ENCODE measurements at regions of chr3 and their contacts with region 1.

Region 1: GRCh38 chr3:15241341-15241740 is 35.3 kb downstream of the CAPN7 start:
- DNase-seq: no peak
- ATAC-seq: no peak
- H3K4me3 ChIP-seq: no peak overlapping the region
- H3K27ac ChIP-seq: no peak overlapping the region
- H3K4me1 ChIP-seq: no peaks in the 10 kb centered on the region
- H3K27me3 ChIP-seq: no peaks in the 10 kb centered on the region
- CTCF ChIP-seq: 0 out of 2 replicates have a peak, but pooled peaks have one; percentile 21
- POLR2A ChIP-seq: no peak
- RAD21 ChIP-seq: 0 out of 2 replicates have a peak, but pooled peaks have one; percentile 3

Region 2: DNA sequence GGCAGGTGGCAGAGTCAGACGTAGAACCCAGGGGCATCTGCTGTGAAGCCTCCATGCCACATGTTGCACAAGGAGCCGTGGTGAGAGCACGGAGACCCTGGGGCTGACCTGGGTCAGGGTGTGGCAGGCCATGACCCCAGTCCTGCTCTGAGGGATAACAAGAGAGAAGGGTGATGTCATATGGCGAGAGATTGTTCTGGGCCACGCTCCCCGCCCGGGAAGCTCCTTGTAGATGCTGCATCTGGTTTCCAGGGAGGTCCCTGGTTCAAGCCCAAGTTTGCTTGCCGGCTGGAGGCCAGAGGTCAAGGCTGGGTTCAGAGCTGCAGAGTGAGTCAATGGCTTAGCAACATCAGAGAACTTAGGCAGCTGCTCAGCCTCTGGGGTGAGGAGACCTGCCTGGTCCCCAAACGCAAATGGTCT is 405.3 kb before region 1 on chr3:
- CTCF ChIA-PET with region 1: no interaction called
- POLR2A ChIA-PET with region 1: no interaction called
- dilution Hi-C with region 1: no loop called
- in situ Hi-C with region 1: no loop called
- intact Hi-C with region 1: no loop called
- DNase-seq: no peak
- ATAC-seq: no peak
- H3K4me3 ChIP-seq: no peak overlapping the region
- H3K27ac ChIP-seq: no peak overlapping the region
- H3K4me1 ChIP-seq: no peaks in the 10 kb centered on the region
- H3K27me3 ChIP-seq: peaks cover 27% of the 10 kb centered on the region
- CTCF ChIP-seq: no peak
- POLR2A ChIP-seq: no peak
- RAD21 ChIP-seq: no peak

Region 3: GRCh38 chr3:15199493-15200105 is 41.7 kb before region 1 on chr3:
- CTCF ChIA-PET with region 1: no interaction called
- POLR2A ChIA-PET with region 1: no interaction called
- dilution Hi-C with region 1: no loop called
- in situ Hi-C with region 1: no loop called
- intact Hi-C with region 1: no loop called
- DNase-seq: no peak
- ATAC-seq: no peak
- H3K4me3 ChIP-seq: no peak overlapping the region
- H3K27ac ChIP-seq: no peak overlapping the region
- H3K4me1 ChIP-seq: no peaks in the 10 kb centered on the region
- H3K27me3 ChIP-seq: peaks cover 10% of the 10 kb centered on the region
- CTCF ChIP-seq: no peak
- POLR2A ChIP-seq: no peak
- RAD21 ChIP-seq: no peak

Region 4: DNA sequence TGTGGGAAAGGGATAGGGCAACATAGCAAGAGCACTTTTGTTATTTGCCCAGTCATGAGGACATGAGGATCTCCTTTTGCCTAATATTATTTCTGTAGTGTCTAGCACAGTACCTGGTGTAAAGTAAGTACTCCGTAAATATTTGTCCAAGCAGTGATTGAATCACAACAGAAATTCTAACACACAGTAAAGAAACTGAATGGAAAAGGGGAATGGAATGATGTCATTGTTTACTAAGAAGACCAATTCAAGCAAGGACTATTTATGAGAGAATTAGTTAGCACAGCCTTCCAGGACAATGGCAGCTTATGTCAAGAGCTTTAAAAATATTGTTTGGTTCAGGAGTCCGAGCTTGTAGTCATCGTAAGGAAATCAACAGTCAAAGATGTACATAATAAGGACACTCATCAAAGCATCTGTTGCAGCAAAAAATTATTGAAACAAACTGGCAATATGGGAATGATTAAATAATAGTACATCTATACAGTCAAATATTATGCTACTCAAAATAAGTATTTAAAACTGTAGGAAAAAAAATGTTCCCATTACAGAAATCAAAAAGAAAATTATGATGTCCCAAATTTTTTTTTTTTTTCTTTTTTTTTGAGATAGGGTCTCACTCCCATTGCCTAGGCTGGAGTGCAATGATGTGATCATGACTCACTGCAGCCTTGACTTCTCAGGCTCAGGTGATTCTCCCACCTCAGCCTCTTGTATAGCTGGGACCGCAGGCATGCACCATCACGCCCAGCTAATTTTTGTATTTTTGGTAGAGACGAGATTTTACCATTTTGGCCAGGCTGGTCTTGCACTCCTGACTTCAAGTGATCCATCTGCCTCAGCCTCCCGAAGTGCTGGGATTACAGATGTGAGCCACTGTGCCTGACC is 17.4 kb before region 1 on chr3:
- CTCF ChIA-PET with region 1: no interaction called
- POLR2A ChIA-PET with region 1: no interaction called
- dilution Hi-C with region 1: no loop called
- in situ Hi-C with region 1: no loop called
- intact Hi-C with region 1: loop called (anchors 2 kb)
- DNase-seq: peak; percentile 64
- ATAC-seq: peak; percentile 81
- H3K4me3 ChIP-seq: no peak overlapping the region
- H3K27ac ChIP-seq: no peak overlapping the region
- H3K4me1 ChIP-seq: no peaks in the 10 kb centered on the region
- H3K27me3 ChIP-seq: no peaks in the 10 kb centered on the region
- CTCF ChIP-seq: no peak
- POLR2A ChIP-seq: no peak
- RAD21 ChIP-seq: no peak

Region 5: GRCh38 chr3:15572138-15572537 is 330.8 kb after region 1 on chr3:
- CTCF ChIA-PET with region 1: no interaction called
- POLR2A ChIA-PET with region 1: no interaction called
- dilution Hi-C with region 1: no loop called
- in situ Hi-C with region 1: no loop called
- intact Hi-C with region 1: loop called (anchors 5 kb)
- DNase-seq: no peak
- ATAC-seq: no peak
- H3K4me3 ChIP-seq: no peak overlapping the region
- H3K27ac ChIP-seq: no peak overlapping the region
- H3K4me1 ChIP-seq: no peaks in the 10 kb centered on the region
- H3K27me3 ChIP-seq: no peaks in the 10 kb centered on the region
- CTCF ChIP-seq: no peak
- POLR2A ChIP-seq: no peak
- RAD21 ChIP-seq: no peak

Region 6: GRCh38 chr3:15682561-15683185 is 441.3 kb after region 1 on chr3:
- CTCF ChIA-PET with region 1: no interaction called
- POLR2A ChIA-PET with region 1: no interaction called
- dilution Hi-C with region 1: no loop called
- in situ Hi-C with region 1: loop called (anchors 25 kb)
- intact Hi-C with region 1: no loop called
- DNase-seq: peak; percentile 57
- ATAC-seq: peak; percentile 48
- H3K4me3 ChIP-seq: no peak overlapping the region
- H3K27ac ChIP-seq: no peak overlapping the region
- H3K4me1 ChIP-seq: no peaks in the 10 kb centered on the region; the same call in 1 of the 2 replicates
- H3K27me3 ChIP-seq: no peaks in the 10 kb centered on the region
- CTCF ChIP-seq: no peak
- POLR2A ChIP-seq: no peak
- RAD21 ChIP-seq: no peak